B cell (primary cell): ENCODE measurements at regions of chrX and their contacts with region 1.

Region 1: GRCh38 chrX:2521092-2521926 is 20.5 kb upstream of the DHRSX start:
- DNase-seq: peak; percentile 91
- ATAC-seq: peak; percentile 75
- H3K4me3 ChIP-seq: peak overlapping the region in 2 of 5 experiments; percentile 26 to 37
- H3K4me3 Mint-ChIP-seq: no peak overlapping the region
- H3K27ac ChIP-seq: peak overlapping the region; percentile 62 to 63
- H3K27ac Mint-ChIP-seq: no peak overlapping the region
- H3K4me1 ChIP-seq: peaks cover 32 to 37% of the 10 kb centered on the region in 2 donors
- H3K4me1 Mint-ChIP-seq: peaks cover 23% of the 10 kb centered on the region
- H3K27me3 ChIP-seq: no peaks in the 10 kb centered on the region
- H3K27me3 Mint-ChIP-seq: peaks cover under 1% of the 10 kb centered on the region
- CTCF ChIP-seq: no peak

Region 2: GRCh38 chrX:1391707-1392375 is 1129.5 kb before region 1 on chrX and contains the start of gene SLC25A6:
- CTCF ChIA-PET with region 1: no interaction called
- POLR2A ChIA-PET with region 1: no interaction called
- intact Hi-C with region 1: loop called (anchors 10 kb)
- DNase-seq: peak; percentile 99
- ATAC-seq: peak; percentile 95
- H3K4me3 ChIP-seq: peak within 1 kb of the TSS; percentile 60 to 100 (median 99)
- H3K4me3 Mint-ChIP-seq: peak within 1 kb of the TSS; percentile 92
- H3K27ac ChIP-seq: peak within 1 kb of the TSS; percentile 96 to 98
- H3K27ac Mint-ChIP-seq: peak within 1 kb of the TSS; percentile 96
- H3K4me1 ChIP-seq: peaks cover 17 to 22% of the 10 kb centered on the region in 2 donors
- H3K4me1 Mint-ChIP-seq: peaks cover 38% of the 10 kb centered on the region
- H3K27me3 ChIP-seq: no peaks in the 10 kb centered on the region
- H3K27me3 Mint-ChIP-seq: no peaks in the 10 kb centered on the region
- CTCF ChIP-seq: no peak
- total RNA-seq, gene SLC25A6: 323 and 343 TPM in 2 replicates

Region 3: DNA sequence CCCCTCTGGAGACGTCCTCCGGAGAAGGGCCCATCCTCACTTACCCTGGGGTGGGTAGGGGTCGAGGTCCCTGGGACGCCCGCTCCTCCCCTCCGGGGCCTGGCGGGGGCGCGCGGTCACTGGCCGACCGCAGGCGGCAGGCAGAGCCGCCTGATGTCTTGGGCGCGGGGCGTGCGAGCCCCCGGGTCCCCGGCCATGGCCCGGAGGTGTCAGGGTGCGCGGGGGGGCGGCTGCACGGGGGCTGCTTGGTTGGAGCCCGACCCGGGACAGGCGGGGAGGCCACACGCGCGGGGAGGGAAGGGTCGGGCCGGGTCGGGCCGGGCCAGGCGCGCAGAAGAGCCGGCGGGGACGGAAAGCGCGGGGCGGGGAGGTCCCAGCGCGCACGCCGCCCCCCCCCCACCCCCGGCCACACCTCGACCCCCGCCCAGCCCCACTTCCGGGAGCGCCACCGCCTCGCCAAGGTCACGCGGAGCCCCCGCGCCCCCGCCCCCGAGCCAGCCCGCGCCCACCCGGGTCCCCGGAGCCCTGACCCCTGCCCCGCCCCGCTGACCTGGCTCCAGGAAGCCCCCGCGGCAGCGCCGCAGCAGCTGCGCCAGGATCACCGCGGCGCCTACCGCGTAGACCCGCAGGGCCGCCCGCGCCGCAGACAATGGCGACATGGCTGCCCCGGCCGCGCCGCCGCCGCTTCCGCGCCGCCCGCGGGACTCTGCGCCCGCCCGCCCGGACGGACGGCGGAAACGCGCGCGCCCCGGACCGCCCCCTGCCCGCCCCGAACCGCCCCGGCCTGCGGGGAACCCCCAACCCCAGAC is 20.8 kb before region 1 on chrX and contains the starts of genes DHRSX and ZBED1:
- CTCF ChIA-PET with region 1: no interaction called
- POLR2A ChIA-PET with region 1: no interaction called
- intact Hi-C with region 1: loop called (anchors 1 kb)
- DNase-seq: peak; percentile 71
- ATAC-seq: peak; percentile 72
- H3K4me3 ChIP-seq: peak within 1 kb of the TSS; percentile 56 to 78 (median 69)
- H3K4me3 Mint-ChIP-seq: peak within 1 kb of the TSS; percentile 87
- H3K27ac ChIP-seq: peak within 1 kb of the TSS; percentile 43 to 85
- H3K27ac Mint-ChIP-seq: peak within 1 kb of the TSS; percentile 88
- H3K4me1 ChIP-seq: peaks cover 22 to 38% of the 10 kb centered on the region in 2 donors
- H3K4me1 Mint-ChIP-seq: peaks cover 32% of the 10 kb centered on the region
- H3K27me3 ChIP-seq: no peaks in the 10 kb centered on the region
- H3K27me3 Mint-ChIP-seq: no peaks in the 10 kb centered on the region
- CTCF ChIP-seq: no peak
- total RNA-seq, gene DHRSX: 39.0 and 46.2 TPM in 2 replicates
- total RNA-seq, gene ZBED1: 44.7 and 54.5 TPM in 2 replicates

Region 4: GRCh38 chrX:2566055-2566454 is 44.7 kb after region 1 on chrX:
- CTCF ChIA-PET with region 1: no interaction called
- POLR2A ChIA-PET with region 1: no interaction called
- intact Hi-C with region 1: no loop called
- DNase-seq: no peak
- ATAC-seq: no peak
- H3K4me3 ChIP-seq: no peak overlapping the region
- H3K4me3 Mint-ChIP-seq: no peak overlapping the region
- H3K27ac ChIP-seq: no peak overlapping the region
- H3K27ac Mint-ChIP-seq: no peak overlapping the region
- H3K4me1 ChIP-seq: no peaks in the 10 kb centered on the region
- H3K4me1 Mint-ChIP-seq: no peaks in the 10 kb centered on the region
- H3K27me3 ChIP-seq: no peaks in the 10 kb centered on the region
- H3K27me3 Mint-ChIP-seq: no peaks in the 10 kb centered on the region
- CTCF ChIP-seq: no peak

Region 5: GRCh38 chrX:2589186-2590030 is 68.1 kb after region 1 on chrX:
- CTCF ChIA-PET with region 1: no interaction called
- POLR2A ChIA-PET with region 1: no interaction called
- intact Hi-C with region 1: loop called (anchors 5 kb)
- DNase-seq: no peak
- ATAC-seq: no peak
- H3K4me3 ChIP-seq: no peak overlapping the region
- H3K4me3 Mint-ChIP-seq: no peak overlapping the region
- H3K27ac ChIP-seq: no peak overlapping the region
- H3K27ac Mint-ChIP-seq: no peak overlapping the region
- H3K4me1 ChIP-seq: peaks cover 0 to 3% of the 10 kb centered on the region in 2 donors
- H3K4me1 Mint-ChIP-seq: peaks cover 13% of the 10 kb centered on the region
- H3K27me3 ChIP-seq: peaks cover 0 to 12% (median 2%) of the 10 kb centered on the region in 4 experiments
- H3K27me3 Mint-ChIP-seq: peaks cover 10% of the 10 kb centered on the region
- CTCF ChIP-seq: no peak

Region 6: DNA sequence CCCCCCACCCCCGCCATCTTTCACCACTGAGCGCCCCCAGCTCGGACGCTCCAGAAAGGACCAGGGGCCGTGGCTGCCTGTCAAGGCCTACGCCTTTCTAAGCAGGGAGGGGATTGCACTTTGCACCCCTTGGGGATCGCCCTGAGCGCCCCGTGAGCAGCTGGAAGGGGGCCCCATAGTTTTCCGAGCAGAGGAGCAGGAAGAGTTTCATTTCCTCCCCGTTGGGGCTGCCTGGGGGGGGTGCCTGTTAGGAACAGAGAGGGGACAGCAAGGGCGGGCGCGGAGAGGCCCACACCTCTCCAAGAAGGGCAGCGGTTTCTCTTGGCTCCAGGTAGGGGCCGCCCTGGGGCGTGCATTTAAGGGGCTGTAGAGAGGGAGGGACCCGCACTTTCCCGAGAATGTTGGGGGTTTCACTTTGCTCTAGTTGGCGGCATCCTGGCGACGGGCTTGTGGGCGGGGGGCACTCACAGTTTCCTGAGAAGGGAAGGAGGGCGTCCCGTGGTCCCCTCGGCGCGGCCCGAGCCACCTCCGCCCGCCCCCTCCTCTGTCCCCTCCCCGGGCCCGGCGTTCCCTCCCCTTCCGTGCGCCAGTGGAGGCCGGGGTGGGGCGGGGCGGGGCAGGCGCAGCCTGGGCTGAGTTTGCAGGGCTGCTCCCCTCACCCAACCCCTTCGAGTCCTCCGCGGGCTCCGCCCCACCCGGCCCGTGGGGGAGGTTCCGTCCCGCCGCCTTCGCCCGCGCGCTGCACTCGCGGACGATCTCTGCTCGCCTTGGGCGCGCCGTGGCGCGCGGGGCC is 87.5 kb after region 1 on chrX:
- CTCF ChIA-PET with region 1: no interaction called
- POLR2A ChIA-PET with region 1: no interaction called
- intact Hi-C with region 1: loop called (anchors 5 kb)
- DNase-seq: peak; percentile 90
- ATAC-seq: peak; percentile 97
- H3K4me3 ChIP-seq: peak overlapping the region; percentile 36 to 89 (median 83)
- H3K4me3 Mint-ChIP-seq: peak overlapping the region; percentile 94
- H3K27ac ChIP-seq: peak overlapping the region; percentile 43 to 58
- H3K27ac Mint-ChIP-seq: peak overlapping the region; percentile 89
- H3K4me1 ChIP-seq: peaks cover 16 to 25% of the 10 kb centered on the region in 2 donors
- H3K4me1 Mint-ChIP-seq: peaks cover 32% of the 10 kb centered on the region
- H3K27me3 ChIP-seq: no peaks in the 10 kb centered on the region
- H3K27me3 Mint-ChIP-seq: no peaks in the 10 kb centered on the region
- CTCF ChIP-seq: no peak